Caco-2 (cell line): ENCODE measurements at regions of chr5 and their contacts with region 1.

Region 1: DNA sequence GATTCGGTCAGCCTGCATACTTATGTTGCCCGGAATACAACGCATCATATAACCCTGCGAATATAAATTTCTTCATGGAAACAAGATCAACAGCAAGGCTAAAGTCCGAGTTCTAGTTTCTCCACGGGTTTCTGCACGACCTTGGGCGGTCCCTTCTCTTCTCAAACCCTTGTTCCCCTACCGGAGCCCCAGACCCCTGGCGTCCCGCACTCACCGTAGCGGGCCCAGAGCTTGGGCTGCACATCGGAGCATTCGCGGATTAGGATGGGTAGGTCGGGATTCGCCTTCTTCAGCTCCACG is 438 bp downstream of the NDUFA2 start:
- DNase-seq: peak in 1 of 2 experiments; percentile 28
- H3K4me3 ChIP-seq: peak overlapping the region; percentile 73
- H3K4me3 Mint-ChIP-seq: peak overlapping the region; percentile 96
- H3K27ac Mint-ChIP-seq: peak overlapping the region; percentile 96
- H3K4me1 ChIP-seq: no peaks in the 10 kb centered on the region
- H3K4me1 Mint-ChIP-seq: peaks cover 6% of the 10 kb centered on the region
- H3K27me3 ChIP-seq: no peaks in the 10 kb centered on the region
- H3K27me3 Mint-ChIP-seq: no peaks in the 10 kb centered on the region
- CTCF ChIP-seq: no peak

Region 2: DNA sequence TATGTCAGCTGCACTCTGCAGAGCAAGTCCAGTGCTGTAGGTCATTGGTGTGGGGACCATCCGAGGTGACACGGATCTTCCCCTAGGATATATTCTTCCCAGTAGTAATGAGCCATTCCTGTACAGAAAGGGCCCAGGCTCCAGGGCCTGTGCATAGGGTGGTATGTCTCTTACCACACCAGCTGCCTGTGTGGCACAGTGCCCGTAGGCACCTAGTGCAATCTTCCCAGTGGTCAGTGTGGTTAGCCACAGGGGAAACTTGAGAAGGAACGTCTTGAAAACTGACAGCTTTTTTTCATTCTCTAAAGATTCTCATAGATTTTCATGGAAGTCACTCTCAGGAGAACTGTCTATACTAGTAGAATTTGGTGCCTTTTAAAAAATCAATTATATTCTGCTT is 432.2 kb before region 1 on chr5:
- CTCF ChIA-PET with region 1: no interaction called
- POLR2A ChIA-PET with region 1: no interaction called
- intact Hi-C with region 1: loop called (anchors 10 kb)
- DNase-seq: no peak
- H3K4me3 ChIP-seq: no peak overlapping the region
- H3K4me3 Mint-ChIP-seq: no peak overlapping the region
- H3K27ac Mint-ChIP-seq: no peak overlapping the region
- H3K4me1 ChIP-seq: peaks cover 41% of the 10 kb centered on the region
- H3K4me1 Mint-ChIP-seq: peaks cover 35% of the 10 kb centered on the region
- H3K27me3 ChIP-seq: no peaks in the 10 kb centered on the region
- H3K27me3 Mint-ChIP-seq: no peaks in the 10 kb centered on the region
- CTCF ChIP-seq: no peak

Region 3: GRCh38 chr5:140336388-140336787 is 310.6 kb before region 1 on chr5:
- CTCF ChIA-PET with region 1: no interaction called
- POLR2A ChIA-PET with region 1: no interaction called
- intact Hi-C with region 1: no loop called
- DNase-seq: peak in 1 of 2 experiments; percentile 30
- H3K4me3 ChIP-seq: no peak overlapping the region
- H3K4me3 Mint-ChIP-seq: no peak overlapping the region
- H3K27ac Mint-ChIP-seq: no peak overlapping the region
- H3K4me1 ChIP-seq: peaks cover 13% of the 10 kb centered on the region; the same call in 1 of the 2 replicates
- H3K4me1 Mint-ChIP-seq: peaks cover 11% of the 10 kb centered on the region
- H3K27me3 ChIP-seq: no peaks in the 10 kb centered on the region
- H3K27me3 Mint-ChIP-seq: no peaks in the 10 kb centered on the region
- CTCF ChIP-seq: no peak

Region 4: GRCh38 chr5:140497897-140498296 is 149.1 kb before region 1 on chr5:
- CTCF ChIA-PET with region 1: no interaction called
- POLR2A ChIA-PET with region 1: no interaction called
- intact Hi-C with region 1: no loop called
- DNase-seq: peak in 1 of 2 experiments; percentile 8
- H3K4me3 ChIP-seq: no peak overlapping the region
- H3K4me3 Mint-ChIP-seq: no peak overlapping the region
- H3K27ac Mint-ChIP-seq: no peak overlapping the region
- H3K4me1 ChIP-seq: no peaks in the 10 kb centered on the region
- H3K4me1 Mint-ChIP-seq: peaks cover 6% of the 10 kb centered on the region
- H3K27me3 ChIP-seq: no peaks in the 10 kb centered on the region
- H3K27me3 Mint-ChIP-seq: no peaks in the 10 kb centered on the region
- CTCF ChIP-seq: no peak

Region 5: GRCh38 chr5:140557136-140557805 is 89.7 kb before region 1 on chr5 and contains the start of gene SRA1:
- CTCF ChIA-PET with region 1: no interaction called
- POLR2A ChIA-PET with region 1: interaction called, 21 read pairs
- intact Hi-C with region 1: loop called (anchors 1 kb)
- DNase-seq: peak; percentile 93 to 94
- H3K4me3 ChIP-seq: peak within 1 kb of the TSS; percentile 79
- H3K4me3 Mint-ChIP-seq: peak within 1 kb of the TSS; percentile 87
- H3K27ac Mint-ChIP-seq: peak within 1 kb of the TSS; percentile 91
- H3K4me1 ChIP-seq: peaks cover 14% of the 10 kb centered on the region; the same call in 1 of the 2 replicates
- H3K4me1 Mint-ChIP-seq: peaks cover 35% of the 10 kb centered on the region
- H3K27me3 ChIP-seq: no peaks in the 10 kb centered on the region
- H3K27me3 Mint-ChIP-seq: no peaks in the 10 kb centered on the region
- CTCF ChIP-seq: peak in 1 of 2 experiments; percentile 1
- total RNA-seq, gene SRA1: 44.0 and 50.3 TPM in 2 replicates

Region 6: DNA sequence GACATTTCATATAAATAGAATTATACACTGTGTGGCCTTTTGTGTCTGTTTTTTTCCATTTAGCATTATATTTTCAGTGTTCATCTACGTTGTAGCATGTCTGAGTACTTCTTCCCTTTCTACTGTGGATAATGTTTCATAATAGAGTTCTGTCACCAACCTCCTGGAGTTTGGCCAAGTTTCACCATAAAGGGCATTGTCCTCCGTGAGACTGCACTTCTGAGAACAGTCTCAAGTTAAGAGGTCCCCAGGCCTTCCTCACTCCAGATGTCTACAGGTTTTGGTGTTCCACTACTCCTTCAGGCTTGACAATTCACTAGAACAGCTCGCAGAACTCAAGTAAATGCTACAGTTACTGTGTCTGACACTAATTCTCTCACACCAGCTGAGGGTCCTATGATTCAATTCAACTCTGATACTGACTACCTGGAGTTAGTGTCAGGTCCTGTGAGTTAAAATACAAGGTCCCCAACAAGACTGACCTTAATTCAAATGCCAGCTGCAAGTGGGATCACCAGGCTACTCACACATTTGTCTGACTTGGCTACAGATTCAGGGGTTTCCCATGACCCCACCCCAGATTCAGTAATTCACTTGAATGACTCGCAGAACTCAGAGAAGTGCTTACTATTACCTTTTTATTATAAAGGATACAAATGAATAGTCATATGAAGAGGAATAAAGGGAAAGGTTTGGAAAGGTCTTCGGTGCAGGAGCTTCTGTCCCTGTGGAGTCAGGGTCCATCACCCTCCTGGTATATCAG is 51.3 kb before region 1 on chr5:
- CTCF ChIA-PET with region 1: no interaction called
- POLR2A ChIA-PET with region 1: no interaction called
- intact Hi-C with region 1: no loop called
- DNase-seq: no peak
- H3K4me3 ChIP-seq: no peak overlapping the region
- H3K4me3 Mint-ChIP-seq: no peak overlapping the region
- H3K27ac Mint-ChIP-seq: no peak overlapping the region
- H3K4me1 ChIP-seq: no peaks in the 10 kb centered on the region
- H3K4me1 Mint-ChIP-seq: no peaks in the 10 kb centered on the region
- H3K27me3 ChIP-seq: no peaks in the 10 kb centered on the region
- H3K27me3 Mint-ChIP-seq: no peaks in the 10 kb centered on the region
- CTCF ChIP-seq: no peak

Region 7: DNA sequence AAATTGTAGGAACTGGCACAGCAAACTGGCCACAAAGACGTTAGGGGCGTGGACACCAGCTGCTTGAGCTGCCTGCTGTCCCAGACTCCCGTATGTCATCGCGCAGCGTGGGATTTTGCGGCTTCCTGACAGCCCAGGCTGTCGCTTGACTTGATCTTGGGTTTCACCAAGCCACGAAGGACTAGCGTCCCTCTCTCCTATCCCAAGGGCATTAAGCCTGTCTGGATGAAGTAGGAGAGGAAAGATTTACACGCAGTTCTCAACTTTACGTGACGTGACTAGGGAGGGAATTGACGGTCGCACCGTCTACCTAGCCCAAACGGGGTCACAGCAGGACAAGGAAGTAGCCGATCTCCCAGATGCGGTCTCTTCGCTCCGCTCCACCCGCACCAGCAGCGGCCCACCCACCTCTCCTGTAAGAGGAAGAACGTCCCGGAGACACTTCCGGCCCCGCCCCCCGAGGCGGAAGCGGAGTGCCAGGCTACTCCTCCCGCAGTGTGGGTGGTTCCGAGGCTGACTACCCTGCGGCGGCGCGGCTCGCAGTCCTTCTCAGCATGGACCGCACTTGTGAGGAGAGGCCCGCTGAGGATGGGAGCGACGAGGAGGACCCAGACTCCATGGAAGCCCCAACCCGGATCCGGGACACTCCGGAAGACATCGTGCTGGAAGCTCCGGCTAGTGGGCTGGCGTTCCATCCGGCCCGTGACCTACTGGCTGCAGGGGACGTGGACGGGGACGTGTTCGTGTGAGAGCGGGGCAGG is 17.5 kb after region 1 on chr5 and contains the start of gene WDR55:
- CTCF ChIA-PET with region 1: interaction called, 3 read pairs
- POLR2A ChIA-PET with region 1: interaction called, 32 read pairs
- intact Hi-C with region 1: loop called (anchors 1 kb)
- DNase-seq: peak; percentile 97
- H3K4me3 ChIP-seq: peak within 1 kb of the TSS; percentile 86
- H3K4me3 Mint-ChIP-seq: peak within 1 kb of the TSS; percentile 98
- H3K27ac Mint-ChIP-seq: peak within 1 kb of the TSS; percentile 89
- H3K4me1 ChIP-seq: peaks cover 7% of the 10 kb centered on the region; the same call in 1 of the 2 replicates
- H3K4me1 Mint-ChIP-seq: peaks cover 14% of the 10 kb centered on the region
- H3K27me3 ChIP-seq: no peaks in the 10 kb centered on the region
- H3K27me3 Mint-ChIP-seq: no peaks in the 10 kb centered on the region
- CTCF ChIP-seq: no peak
- total RNA-seq, gene WDR55: 38.8 and 40.2 TPM in 2 replicates

Region 8: GRCh38 chr5:140700177-140701144 is 53.5 kb after region 1 on chr5 and contains the start of gene ZMAT2:
- CTCF ChIA-PET with region 1: no interaction called
- POLR2A ChIA-PET with region 1: interaction called, 27 read pairs
- intact Hi-C with region 1: no loop called
- DNase-seq: peak; percentile 94 to 96
- H3K4me3 ChIP-seq: peak within 1 kb of the TSS; percentile 67
- H3K4me3 Mint-ChIP-seq: peak within 1 kb of the TSS; percentile 85
- H3K27ac Mint-ChIP-seq: peak within 1 kb of the TSS; percentile 92
- H3K4me1 ChIP-seq: no peaks in the 10 kb centered on the region; the same call in 1 of the 2 replicates
- H3K4me1 Mint-ChIP-seq: no peaks in the 10 kb centered on the region
- H3K27me3 ChIP-seq: no peaks in the 10 kb centered on the region
- H3K27me3 Mint-ChIP-seq: no peaks in the 10 kb centered on the region
- CTCF ChIP-seq: no peak
- total RNA-seq, gene ZMAT2: 73.1 and 76.6 TPM in 2 replicates